ENCODE measurements at regions of chr2 and their contacts with region 1.

Region 1: DNA sequence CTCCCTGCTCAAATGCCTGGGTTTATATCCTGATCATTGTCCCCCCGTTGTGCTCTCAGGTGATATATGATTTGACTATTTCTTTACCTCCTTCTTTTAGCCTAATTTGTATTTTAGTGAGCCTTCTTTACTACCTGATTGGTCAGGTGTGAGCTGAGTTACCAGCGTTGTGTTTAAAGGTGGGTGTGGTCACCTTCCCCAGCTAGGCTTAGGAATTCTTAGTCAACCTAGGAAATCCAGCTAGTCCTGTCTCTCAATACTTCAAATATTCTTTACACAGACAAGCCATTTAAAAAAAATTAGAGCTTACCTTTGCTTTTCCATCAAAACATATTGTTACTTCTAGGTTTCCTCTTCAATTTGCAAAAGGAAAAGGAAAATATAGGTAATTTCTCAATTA is 30.2 kb downstream of the KYNU start:
- DNase-seq: no peak
- ATAC-seq: no peak
- H3K4me3 ChIP-seq: no peak overlapping the region
- H3K27ac ChIP-seq: no peak overlapping the region
- H3K4me1 ChIP-seq: no peaks in the 10 kb centered on the region
- H3K27me3 ChIP-seq: no peaks in the 10 kb centered on the region
- CTCF ChIP-seq: no peak
- EP300 ChIP-seq: no peak
- POLR2A ChIP-seq: no peak
- RAD21 ChIP-seq: no peak

Region 2: DNA sequence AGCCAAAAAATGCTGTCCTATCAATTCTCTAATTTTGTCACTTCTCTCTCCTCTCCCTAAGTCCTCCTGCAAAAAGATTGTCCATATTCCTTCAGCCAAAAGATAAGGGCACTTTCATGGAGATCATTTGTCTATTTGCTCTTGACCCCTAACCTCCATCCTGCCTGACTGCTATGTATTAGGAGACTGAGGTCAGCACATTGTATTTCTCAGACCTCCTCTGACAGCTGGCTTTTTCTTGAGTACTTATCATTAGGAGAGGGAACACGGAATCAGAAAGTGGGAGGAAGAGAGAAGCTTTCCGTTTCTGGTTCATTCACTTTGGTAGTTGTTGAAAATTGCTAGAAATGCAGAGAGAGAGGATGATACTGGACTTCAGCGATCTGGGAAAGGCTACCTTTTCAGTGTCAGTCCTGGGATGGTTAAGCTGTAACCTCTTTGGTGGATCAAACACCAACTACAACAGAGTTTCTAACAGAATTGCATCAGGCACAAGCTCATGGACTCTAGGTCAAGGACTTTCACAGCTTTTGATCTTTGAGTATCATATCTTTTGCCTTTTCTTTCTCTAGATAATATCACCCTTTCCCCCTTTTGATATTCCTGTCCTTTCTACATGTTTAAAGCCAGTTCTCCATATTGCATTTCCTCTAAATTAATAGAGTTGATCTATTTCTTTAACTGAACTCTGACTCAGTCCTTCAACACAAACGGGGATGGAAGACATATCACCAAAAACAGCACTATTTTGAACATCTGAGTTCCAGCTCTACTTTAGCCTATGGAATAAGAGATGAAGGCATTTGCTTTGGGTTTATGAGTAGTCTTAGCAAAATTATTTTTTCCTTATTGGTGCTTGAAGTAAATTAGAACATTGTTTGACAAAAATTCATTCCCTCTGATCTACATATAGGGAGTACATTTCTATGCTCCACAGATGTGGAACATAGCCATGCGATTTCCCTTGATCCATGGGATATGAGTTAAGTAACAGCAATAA is 93.5 kb before region 1 on chr2:
- CTCF ChIA-PET with region 1: no interaction called
- POLR2A ChIA-PET with region 1: no interaction called
- RAD21 ChIA-PET with region 1: no interaction called
- SMC1A ChIA-PET with region 1: no interaction called
- in situ Hi-C with region 1: no loop called
- intact Hi-C with region 1: no loop called
- DNase-seq: no peak
- ATAC-seq: no peak
- H3K4me3 ChIP-seq: no peak overlapping the region
- H3K27ac ChIP-seq: no peak overlapping the region
- H3K4me1 ChIP-seq: no peaks in the 10 kb centered on the region
- H3K27me3 ChIP-seq: no peaks in the 10 kb centered on the region; a peak in 1 of 4 replicates
- CTCF ChIP-seq: no peak
- EP300 ChIP-seq: no peak
- POLR2A ChIP-seq: no peak
- RAD21 ChIP-seq: no peak

Region 3: DNA sequence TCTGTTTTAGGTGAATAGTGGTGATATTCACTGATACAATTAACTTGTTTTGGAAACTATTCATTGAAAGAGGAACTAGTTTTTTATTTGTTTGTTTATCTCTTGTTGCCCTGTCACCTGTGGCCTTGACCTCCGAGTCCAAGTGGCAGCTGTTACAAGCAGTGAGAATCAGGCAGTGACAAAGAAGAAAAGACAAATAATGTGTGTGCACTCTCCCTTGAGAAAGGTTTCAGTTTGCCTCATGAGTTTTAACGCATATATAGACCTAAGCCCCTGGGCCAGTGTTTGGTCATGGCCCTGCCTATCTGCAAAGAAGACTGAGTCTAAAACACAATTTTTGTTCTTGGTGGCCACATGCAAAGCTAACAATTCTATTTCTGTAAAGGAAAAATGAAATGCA is 14.9 kb before region 1 on chr2:
- CTCF ChIA-PET with region 1: interaction called, 7 read pairs
- POLR2A ChIA-PET with region 1: interaction called, 4 read pairs
- RAD21 ChIA-PET with region 1: interaction called, 8 read pairs
- SMC1A ChIA-PET with region 1: interaction called, 11 read pairs
- in situ Hi-C with region 1: no loop called
- intact Hi-C with region 1: no loop called
- DNase-seq: peak; percentile 79
- ATAC-seq: peak; percentile 98
- H3K4me3 ChIP-seq: no peak overlapping the region
- H3K27ac ChIP-seq: peak overlapping the region; percentile 48; the same call in 1 of the 2 replicates
- H3K4me1 ChIP-seq: peaks cover 14% of the 10 kb centered on the region; the same call in 1 of the 2 replicates
- H3K27me3 ChIP-seq: no peaks in the 10 kb centered on the region
- CTCF ChIP-seq: no peak
- EP300 ChIP-seq: peak; percentile 55 to 92; a peak in 3 of 4 replicates
- POLR2A ChIP-seq: no peak
- RAD21 ChIP-seq: no peak

Measured in GM12878 (cell line).